Prostate gland (tissue), 2 donors: ENCODE measurements at regions of chr11 and their contacts with region 1.

Region 1: GRCh38 chr11:12043959-12044819 is 35.8 kb upstream of the DKK3 start:
- DNase-seq: peak; percentile 84
- H3K4me3 ChIP-seq: no peak overlapping the region
- H3K27ac ChIP-seq: peak overlapping the region; percentile 67 to 71
- H3K4me1 ChIP-seq: no peaks in the 10 kb centered on the region
- H3K27me3 ChIP-seq: no peaks in the 10 kb centered on the region
- CTCF ChIP-seq: peak; percentile 95 to 98 (median 96)
- POLR2A ChIP-seq: no peak

Region 2: GRCh38 chr11:11798586-11799438 is 245.4 kb before region 1 on chr11:
- intact Hi-C with region 1: loop called (anchors 2 kb)
- DNase-seq: peak; percentile 62
- H3K4me3 ChIP-seq: no peak overlapping the region
- H3K27ac ChIP-seq: no peak overlapping the region
- H3K4me1 ChIP-seq: no peaks in the 10 kb centered on the region
- H3K27me3 ChIP-seq: no peaks in the 10 kb centered on the region
- CTCF ChIP-seq: peak; percentile 65 to 87 (median 76)
- POLR2A ChIP-seq: no peak

Region 3: DNA sequence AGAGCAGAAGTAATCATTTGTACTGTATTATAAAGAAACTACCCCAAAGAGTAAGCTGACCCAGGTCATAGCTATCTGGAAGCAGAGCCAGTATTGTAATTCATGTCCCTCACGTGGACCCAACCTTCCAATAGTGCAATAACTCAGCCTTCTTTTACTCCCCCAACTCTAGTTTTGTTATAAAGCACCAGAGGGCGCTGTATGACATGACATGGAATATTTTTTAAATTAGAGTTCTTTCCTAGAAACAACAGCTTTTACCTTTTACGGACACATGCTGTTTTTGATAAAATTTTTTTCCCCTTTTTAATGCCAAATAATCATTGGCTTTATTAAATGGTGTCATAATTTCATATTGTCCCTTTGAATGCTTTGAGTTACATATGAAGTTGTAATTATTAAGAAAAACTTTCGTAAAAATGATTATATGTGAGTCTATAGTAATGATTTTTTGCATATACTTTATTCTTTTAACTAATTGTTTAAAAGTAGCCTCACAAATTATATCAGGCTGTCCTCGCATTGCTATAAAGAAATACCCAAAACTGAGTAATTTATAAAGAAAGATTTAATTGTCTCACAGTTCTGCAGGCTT is 112.6 kb before region 1 on chr11:
- intact Hi-C with region 1: loop called (anchors 2 kb)
- DNase-seq: peak; percentile 12
- H3K4me3 ChIP-seq: no peak overlapping the region
- H3K27ac ChIP-seq: no peak overlapping the region
- H3K4me1 ChIP-seq: no peaks in the 10 kb centered on the region
- H3K27me3 ChIP-seq: no peaks in the 10 kb centered on the region
- CTCF ChIP-seq: peak; percentile 14 to 74 (median 59)
- POLR2A ChIP-seq: no peak

Region 4: DNA sequence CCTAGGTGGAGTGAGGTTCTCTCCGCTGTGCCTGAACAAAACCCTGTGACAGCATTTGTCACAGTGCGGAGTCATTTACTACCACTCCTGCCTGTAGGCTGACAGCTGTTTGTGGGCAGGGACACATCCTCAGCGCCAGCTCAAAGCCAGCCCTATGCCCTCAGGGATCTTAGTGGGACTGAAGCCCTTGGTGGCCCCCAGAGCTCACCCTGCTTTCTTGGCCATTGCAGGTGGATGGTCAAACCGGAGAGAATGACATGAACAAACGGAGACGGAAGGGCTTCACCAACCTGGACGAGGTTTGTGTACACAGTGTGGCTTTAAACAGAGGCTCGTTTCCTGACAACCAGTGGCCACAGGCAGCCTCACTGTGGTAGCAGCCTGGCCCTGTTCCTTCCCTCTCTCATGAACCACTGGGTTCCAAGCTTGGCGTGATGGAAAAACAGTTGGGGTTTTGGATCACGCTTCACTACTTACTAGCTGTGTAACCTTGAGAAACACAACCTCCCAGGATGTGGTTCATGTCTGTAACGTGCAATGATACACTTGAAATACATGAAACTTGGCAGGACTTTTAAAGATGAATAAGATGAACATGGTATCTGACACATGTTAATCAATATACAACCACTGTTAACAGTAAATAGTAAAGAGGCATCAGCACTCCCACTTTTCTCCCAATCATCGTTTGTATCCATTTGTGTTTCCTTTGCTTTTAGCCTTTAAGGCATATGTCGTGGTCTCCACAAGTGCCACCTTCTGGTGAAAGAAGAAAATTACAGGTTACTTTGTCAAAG is 192.0 kb after region 1 on chr11:
- intact Hi-C with region 1: loop called (anchors 2 kb)
- DNase-seq: peak; percentile 25
- H3K4me3 ChIP-seq: no peak overlapping the region
- H3K27ac ChIP-seq: peak overlapping the region; percentile 1 to 24
- H3K4me1 ChIP-seq: peaks cover 5% of the 10 kb centered on the region
- H3K27me3 ChIP-seq: no peaks in the 10 kb centered on the region
- CTCF ChIP-seq: peak; percentile 46 to 85 (median 77)
- POLR2A ChIP-seq: no peak

Region 5: DNA sequence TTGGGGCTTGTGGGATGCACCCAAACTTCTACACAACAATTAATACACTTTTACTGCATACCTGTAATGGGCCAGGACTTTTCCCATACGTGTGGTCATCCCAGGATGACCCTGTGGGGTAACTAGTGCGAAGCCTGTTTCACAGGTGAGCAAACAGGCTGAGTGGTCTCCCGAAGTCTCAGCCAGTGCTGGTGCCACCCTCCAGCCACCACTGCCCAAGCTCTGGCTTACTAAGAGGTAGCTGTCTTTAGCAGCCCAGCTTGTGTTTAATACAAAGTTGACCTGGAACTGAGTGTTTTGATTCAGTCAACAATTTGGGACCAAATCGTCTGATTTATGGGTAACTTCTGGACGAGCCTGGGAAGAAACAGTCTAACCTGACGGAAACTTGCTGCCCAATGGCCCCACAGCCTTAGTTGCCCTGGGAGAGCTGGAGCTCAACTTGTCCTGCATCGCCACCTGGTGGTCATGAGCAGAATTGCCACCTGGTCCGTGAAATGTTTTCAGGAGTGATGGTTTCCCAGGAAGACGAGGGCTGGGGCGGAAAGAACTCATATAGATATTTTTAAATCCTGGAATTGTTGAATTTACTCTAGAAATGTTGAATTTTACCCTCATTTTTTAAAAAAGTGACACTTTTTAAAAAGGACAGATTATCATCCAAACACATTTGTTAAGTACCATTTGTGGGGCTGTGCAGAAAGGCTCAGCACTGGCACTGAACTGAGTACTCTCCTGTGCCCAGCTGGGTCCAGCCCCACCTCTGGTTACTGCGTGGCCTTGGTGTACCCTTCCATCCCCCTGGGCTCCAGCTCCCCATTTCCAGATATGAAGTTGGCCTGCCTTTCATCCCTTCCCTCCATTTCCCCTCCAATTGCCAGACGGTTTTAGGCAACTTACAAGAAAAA is 237.6 kb after region 1 on chr11:
- intact Hi-C with region 1: loop called (anchors 1 kb)
- DNase-seq: peak; percentile 87
- H3K4me3 ChIP-seq: no peak overlapping the region
- H3K27ac ChIP-seq: no peak overlapping the region
- H3K4me1 ChIP-seq: no peaks in the 10 kb centered on the region
- H3K27me3 ChIP-seq: no peaks in the 10 kb centered on the region
- CTCF ChIP-seq: peak; percentile 98 to 99 (median 99)
- POLR2A ChIP-seq: no peak